ENCODE measurements at regions of chr22 and their contacts with region 1.

Region 1: GRCh38 chr22:50306753-50307749 is at the start of gene PLXNB2:
- DNase-seq: peak; percentile 70
- H3K4me3 Mint-ChIP-seq: peak within 1 kb of the TSS; percentile 81
- H3K27ac Mint-ChIP-seq: peak within 1 kb of the TSS; percentile 87
- H3K4me1 Mint-ChIP-seq: peaks cover 21% of the 10 kb centered on the region
- H3K27me3 Mint-ChIP-seq: no peaks in the 10 kb centered on the region
- CTCF ChIP-seq: no peak
- total RNA-seq, gene PLXNB2: 199 and 200 TPM in 2 replicates

Region 2: DNA sequence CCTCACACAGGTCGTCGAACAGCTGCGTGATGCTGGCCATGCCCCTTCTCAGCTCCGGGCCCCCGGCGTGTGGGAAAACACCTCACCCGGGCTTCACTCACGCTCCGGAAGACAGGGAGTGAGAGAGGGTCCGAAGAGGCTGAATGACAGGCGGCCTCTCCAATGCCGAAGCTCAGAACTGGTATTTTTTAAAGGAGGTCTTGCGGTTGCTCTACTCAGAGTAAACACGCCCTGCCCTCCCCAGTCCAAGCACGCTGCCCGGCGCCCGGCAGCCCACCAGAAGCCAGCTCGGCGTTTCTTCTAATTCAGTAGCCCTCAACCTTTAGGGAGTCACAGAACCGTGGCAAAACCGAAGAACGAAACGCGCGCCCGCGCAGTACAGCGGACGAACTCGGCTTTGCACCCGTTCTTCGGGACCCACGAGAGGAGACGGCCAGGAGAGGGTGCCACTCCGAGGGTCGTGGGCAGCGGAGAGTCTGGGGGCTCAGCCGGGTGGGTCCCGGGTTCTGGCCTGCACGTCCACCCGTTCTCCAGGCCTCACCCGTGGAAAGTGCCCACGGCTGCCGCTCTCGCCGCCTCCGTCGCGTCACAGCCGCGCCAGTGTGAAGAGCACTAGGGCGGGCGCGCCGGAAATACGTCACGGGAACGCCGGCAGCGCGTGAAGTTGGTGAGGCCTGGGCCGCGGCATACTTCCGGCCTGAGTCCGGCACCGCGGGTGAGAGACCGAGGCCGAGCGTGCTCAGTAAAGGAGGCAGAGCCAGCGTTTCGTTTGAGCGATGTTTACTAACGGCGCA is 62.4 kb before region 1 on chr22 and contains the start of gene TUBGCP6:
- CTCF ChIA-PET with region 1: no interaction called
- POLR2A ChIA-PET with region 1: interaction called, 12 read pairs
- intact Hi-C with region 1: no loop called
- DNase-seq: peak; percentile 91
- H3K4me3 Mint-ChIP-seq: peak within 1 kb of the TSS; percentile 96
- H3K27ac Mint-ChIP-seq: peak within 1 kb of the TSS; percentile 99
- H3K4me1 Mint-ChIP-seq: peaks cover 16% of the 10 kb centered on the region
- H3K27me3 Mint-ChIP-seq: no peaks in the 10 kb centered on the region
- CTCF ChIP-seq: no peak
- total RNA-seq, gene TUBGCP6: 27.6 and 27.9 TPM in 2 replicates

Region 3: DNA sequence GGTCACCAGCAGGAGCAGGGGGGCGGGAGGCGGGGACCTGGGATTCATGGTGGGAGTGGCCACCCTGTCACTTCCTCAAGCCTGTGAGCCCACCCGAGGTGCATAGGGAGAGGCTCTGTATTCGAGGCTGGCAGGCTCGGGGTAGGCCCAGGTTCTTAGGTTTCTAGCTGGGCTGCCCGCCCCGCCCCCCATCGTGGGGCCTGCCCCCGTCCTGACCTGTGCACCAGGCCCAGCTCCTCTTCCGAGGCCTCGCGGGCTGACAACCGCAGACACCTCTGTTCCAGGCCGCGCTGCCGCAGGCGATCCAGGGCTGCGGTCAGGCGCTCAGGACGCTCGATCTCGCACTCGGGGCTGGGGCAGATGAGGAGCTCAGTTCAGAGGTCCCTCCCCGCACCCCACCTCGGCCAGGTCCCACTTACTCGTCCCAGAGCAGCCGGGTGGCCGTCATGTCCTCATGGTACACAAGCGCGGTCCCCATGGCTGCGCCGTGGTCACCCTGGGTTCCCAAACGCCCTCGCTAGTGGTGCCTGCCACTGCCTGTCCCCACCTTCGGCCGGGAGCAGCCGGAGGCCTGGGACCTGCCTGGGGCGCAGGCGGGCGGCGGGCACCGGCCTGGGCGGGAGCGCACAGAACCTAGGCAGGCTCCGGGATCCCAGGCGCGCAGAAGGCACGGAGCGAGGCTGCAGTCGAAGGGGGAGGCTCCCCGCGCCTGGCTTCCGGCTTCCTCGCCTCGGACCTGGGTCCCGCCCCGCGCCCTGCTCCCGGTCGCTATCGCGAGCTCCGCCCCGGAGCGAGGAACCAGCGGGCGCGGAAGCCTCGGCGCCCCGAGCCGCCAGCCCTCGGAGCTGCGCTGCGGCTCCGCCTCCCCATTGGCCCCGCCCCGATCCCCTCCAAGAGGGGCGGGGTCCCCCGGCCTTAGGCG is 56.2 kb before region 1 on chr22 and contains the start of gene HDAC10:
- CTCF ChIA-PET with region 1: interaction called, 6 read pairs
- POLR2A ChIA-PET with region 1: interaction called, 13 read pairs
- intact Hi-C with region 1: no loop called
- DNase-seq: peak; percentile 68
- H3K4me3 Mint-ChIP-seq: peak within 1 kb of the TSS; percentile 72
- H3K27ac Mint-ChIP-seq: no peak within 1 kb of the TSS
- H3K4me1 Mint-ChIP-seq: no peaks in the 10 kb centered on the region
- H3K27me3 Mint-ChIP-seq: no peaks in the 10 kb centered on the region
- CTCF ChIP-seq: no peak
- total RNA-seq, gene HDAC10: 27.5 and 29.2 TPM in 2 replicates

Region 4: GRCh38 chr22:50276143-50276542 is 30.9 kb before region 1 on chr22:
- CTCF ChIA-PET with region 1: interaction called, 19 read pairs
- POLR2A ChIA-PET with region 1: interaction called, 15 read pairs
- intact Hi-C with region 1: no loop called
- DNase-seq: no peak
- H3K4me3 Mint-ChIP-seq: no peak overlapping the region
- H3K27ac Mint-ChIP-seq: no peak overlapping the region
- H3K4me1 Mint-ChIP-seq: peaks cover 6% of the 10 kb centered on the region
- H3K27me3 Mint-ChIP-seq: no peaks in the 10 kb centered on the region
- CTCF ChIP-seq: peak; percentile 64

Region 5: GRCh38 chr22:50282361-50282760 is 24.7 kb before region 1 on chr22:
- CTCF ChIA-PET with region 1: interaction called, 4 read pairs
- POLR2A ChIA-PET with region 1: interaction called, 22 read pairs
- intact Hi-C with region 1: loop called (anchors 1 kb)
- DNase-seq: peak; percentile 84
- H3K4me3 Mint-ChIP-seq: peak overlapping the region; percentile 44
- H3K27ac Mint-ChIP-seq: no peak overlapping the region
- H3K4me1 Mint-ChIP-seq: peaks cover 4% of the 10 kb centered on the region
- H3K27me3 Mint-ChIP-seq: no peaks in the 10 kb centered on the region
- CTCF ChIP-seq: no peak

Region 6: GRCh38 chr22:50293441-50294318 is 13.4 kb before region 1 on chr22:
- CTCF ChIA-PET with region 1: interaction called, 4 read pairs
- POLR2A ChIA-PET with region 1: interaction called, 73 read pairs
- intact Hi-C with region 1: no loop called
- DNase-seq: peak; percentile 47
- H3K4me3 Mint-ChIP-seq: no peak overlapping the region
- H3K27ac Mint-ChIP-seq: no peak overlapping the region
- H3K4me1 Mint-ChIP-seq: peaks cover 13% of the 10 kb centered on the region
- H3K27me3 Mint-ChIP-seq: no peaks in the 10 kb centered on the region
- CTCF ChIP-seq: no peak

Region 7: GRCh38 chr22:50326959-50327710 is 20.1 kb after region 1 on chr22 and contains the start of gene DENND6B:
- CTCF ChIA-PET with region 1: interaction called, 10 read pairs
- POLR2A ChIA-PET with region 1: interaction called, 60 read pairs
- intact Hi-C with region 1: no loop called
- DNase-seq: peak; percentile 68
- H3K4me3 Mint-ChIP-seq: peak within 1 kb of the TSS; percentile 84
- H3K27ac Mint-ChIP-seq: peak within 1 kb of the TSS; percentile 49
- H3K4me1 Mint-ChIP-seq: peaks cover 18% of the 10 kb centered on the region
- H3K27me3 Mint-ChIP-seq: no peaks in the 10 kb centered on the region
- CTCF ChIP-seq: peak; percentile 42
- total RNA-seq, gene DENND6B: 4.0 and 5.5 TPM in 2 replicates